ENCODE measurements at regions of chr5 and their contacts with region 1.

Region 1: DNA sequence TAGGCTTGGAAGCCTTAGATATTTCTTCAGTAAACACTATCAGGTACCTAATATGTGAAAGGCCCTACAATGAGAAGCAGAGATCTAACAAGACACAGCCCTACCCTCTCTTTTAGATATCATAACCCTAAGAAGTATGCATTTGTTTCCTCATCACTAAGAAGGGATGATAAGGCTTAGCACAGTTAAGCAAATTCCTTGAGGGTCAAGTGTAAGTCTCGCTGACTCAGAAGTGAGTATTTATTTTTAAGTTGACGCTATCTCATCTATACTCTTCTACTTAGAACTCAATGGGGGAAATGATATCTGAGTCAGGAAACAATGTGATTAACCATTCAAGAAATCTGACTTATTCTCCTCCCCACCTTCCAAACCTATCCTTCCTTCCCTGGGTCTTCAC is 149.7 kb downstream of the ESM1 start:
- DNase-seq: no peak
- H3K4me3 Mint-ChIP-seq: no peak overlapping the region
- H3K27ac Mint-ChIP-seq: peak overlapping the region; percentile 27
- H3K4me1 Mint-ChIP-seq: peaks cover 41% of the 10 kb centered on the region
- H3K27me3 Mint-ChIP-seq: no peaks in the 10 kb centered on the region
- CTCF ChIP-seq: no peak

Region 2: GRCh38 chr5:54703133-54703532 is 132.5 kb before region 1 on chr5:
- CTCF ChIA-PET with region 1: interaction called, 4 read pairs
- intact Hi-C with region 1: loop called (anchors 2 kb)
- DNase-seq: peak; percentile 10
- H3K4me3 Mint-ChIP-seq: no peak overlapping the region
- H3K27ac Mint-ChIP-seq: peak overlapping the region; percentile 39
- H3K4me1 Mint-ChIP-seq: peaks cover 34% of the 10 kb centered on the region
- H3K27me3 Mint-ChIP-seq: no peaks in the 10 kb centered on the region
- CTCF ChIP-seq: no peak

Region 3: GRCh38 chr5:54743997-54744788 is 91.5 kb before region 1 on chr5:
- CTCF ChIA-PET with region 1: no interaction called
- intact Hi-C with region 1: loop called (anchors 2 kb)
- DNase-seq: peak; percentile 32
- H3K4me3 Mint-ChIP-seq: no peak overlapping the region
- H3K27ac Mint-ChIP-seq: no peak overlapping the region
- H3K4me1 Mint-ChIP-seq: peaks cover 9% of the 10 kb centered on the region
- H3K27me3 Mint-ChIP-seq: no peaks in the 10 kb centered on the region
- CTCF ChIP-seq: no peak

Region 4: GRCh38 chr5:54807421-54807820 is 28.2 kb before region 1 on chr5:
- CTCF ChIA-PET with region 1: no interaction called
- intact Hi-C with region 1: loop called (anchors 1 kb)
- DNase-seq: no peak
- H3K4me3 Mint-ChIP-seq: no peak overlapping the region
- H3K27ac Mint-ChIP-seq: peak overlapping the region; percentile 86
- H3K4me1 Mint-ChIP-seq: peaks cover 15% of the 10 kb centered on the region
- H3K27me3 Mint-ChIP-seq: no peaks in the 10 kb centered on the region
- CTCF ChIP-seq: no peak

Measured in Calu3 (cell line).